ENCODE measurements at regions of chr16 and their contacts with region 1.

Region 1: DNA sequence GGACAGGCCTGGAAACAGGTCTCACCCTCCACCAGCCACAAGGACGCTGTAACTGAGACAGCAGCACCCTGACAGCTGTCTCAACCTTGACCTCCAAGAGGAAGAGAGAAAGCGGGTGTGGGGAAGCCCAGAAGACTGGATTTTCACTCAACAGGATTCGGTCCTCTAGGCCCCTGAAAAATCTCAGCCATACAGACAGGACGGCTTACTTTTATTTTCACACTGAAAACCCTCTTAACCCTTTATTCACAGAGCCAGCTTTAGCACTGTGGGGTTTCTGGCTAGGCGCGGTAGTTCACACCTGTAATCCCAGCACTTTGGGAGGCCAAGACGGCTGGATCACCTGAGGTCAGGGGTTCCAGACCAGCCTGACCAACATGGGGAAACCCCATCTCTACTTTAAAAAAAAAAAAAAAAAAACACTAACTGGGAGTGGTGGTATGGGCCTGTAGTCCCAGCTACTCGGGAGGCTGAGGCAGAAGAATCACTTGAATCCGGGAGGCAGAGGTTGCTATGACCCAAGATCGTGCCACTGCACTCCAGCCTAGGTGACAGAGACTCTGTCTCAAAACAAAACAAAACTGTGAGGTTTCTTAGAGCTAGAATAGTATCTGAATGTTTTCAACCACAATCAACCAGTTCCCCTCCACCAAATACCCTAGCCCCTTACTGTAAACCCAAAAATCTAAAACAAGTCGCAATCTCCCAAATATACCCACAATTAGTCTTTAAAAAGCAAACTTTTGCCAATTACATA is 5.3 kb downstream of the ANKRD11 start:
- DNase-seq: peak; percentile 58
- ATAC-seq: peak; percentile 18
- H3K4me3 Mint-ChIP-seq: peak overlapping the region; percentile 57
- H3K27ac Mint-ChIP-seq: peak overlapping the region; percentile 88
- H3K4me1 Mint-ChIP-seq: peaks cover 76% of the 10 kb centered on the region
- H3K27me3 Mint-ChIP-seq: no peaks in the 10 kb centered on the region
- CTCF ChIP-seq: no peak

Region 2: GRCh38 chr16:89466920-89467319 is 18.2 kb before region 1 on chr16:
- CTCF ChIA-PET with region 1: interaction called, 4 read pairs
- POLR2A ChIA-PET with region 1: interaction called, 31 read pairs
- intact Hi-C with region 1: no loop called
- DNase-seq: no peak
- ATAC-seq: no peak
- H3K4me3 Mint-ChIP-seq: no peak overlapping the region
- H3K27ac Mint-ChIP-seq: peak overlapping the region; percentile 18
- H3K4me1 Mint-ChIP-seq: peaks cover 59% of the 10 kb centered on the region
- H3K27me3 Mint-ChIP-seq: no peaks in the 10 kb centered on the region
- CTCF ChIP-seq: no peak

Region 3: GRCh38 chr16:89534252-89534756 is 49.2 kb after region 1 on chr16:
- CTCF ChIA-PET with region 1: no interaction called
- POLR2A ChIA-PET with region 1: no interaction called
- intact Hi-C with region 1: no loop called
- DNase-seq: peak; percentile 33
- ATAC-seq: peak; percentile 84
- H3K4me3 Mint-ChIP-seq: no peak overlapping the region
- H3K27ac Mint-ChIP-seq: peak overlapping the region; percentile 83
- H3K4me1 Mint-ChIP-seq: peaks cover 23% of the 10 kb centered on the region
- H3K27me3 Mint-ChIP-seq: no peaks in the 10 kb centered on the region
- CTCF ChIP-seq: no peak